Kidney (tissue), 22 donors: ENCODE measurements at regions of chr6 and their contacts with region 1.

Region 1: GRCh38 chr6:125858427-125859320 is 67.9 kb downstream of the NCOA7 start:
- DNase-seq: peak in 4 of 5 donors; percentile 43 to 88 (median 70)
- H3K4me3 ChIP-seq: no peak overlapping the region
- H3K27ac ChIP-seq: no peak overlapping the region
- H3K4me1 ChIP-seq: peaks cover 0 to under 1% (median 0%) of the 10 kb centered on the region in 3 donors
- H3K27me3 ChIP-seq: no peaks in the 10 kb centered on the region
- CTCF ChIP-seq: peak; percentile 75

Region 2: GRCh38 chr6:125753218-125753936 is 105.3 kb before region 1 on chr6:
- intact Hi-C with region 1: no loop called
- DNase-seq: peak in 2 of 5 donors; percentile 43 to 45
- H3K4me3 ChIP-seq: no peak overlapping the region
- H3K27ac ChIP-seq: no peak overlapping the region
- H3K4me1 ChIP-seq: peaks cover 0 to 2% (median 0%) of the 10 kb centered on the region in 3 donors
- H3K27me3 ChIP-seq: peaks cover 12% of the 10 kb centered on the region
- CTCF ChIP-seq: peak; percentile 45

Region 3: DNA sequence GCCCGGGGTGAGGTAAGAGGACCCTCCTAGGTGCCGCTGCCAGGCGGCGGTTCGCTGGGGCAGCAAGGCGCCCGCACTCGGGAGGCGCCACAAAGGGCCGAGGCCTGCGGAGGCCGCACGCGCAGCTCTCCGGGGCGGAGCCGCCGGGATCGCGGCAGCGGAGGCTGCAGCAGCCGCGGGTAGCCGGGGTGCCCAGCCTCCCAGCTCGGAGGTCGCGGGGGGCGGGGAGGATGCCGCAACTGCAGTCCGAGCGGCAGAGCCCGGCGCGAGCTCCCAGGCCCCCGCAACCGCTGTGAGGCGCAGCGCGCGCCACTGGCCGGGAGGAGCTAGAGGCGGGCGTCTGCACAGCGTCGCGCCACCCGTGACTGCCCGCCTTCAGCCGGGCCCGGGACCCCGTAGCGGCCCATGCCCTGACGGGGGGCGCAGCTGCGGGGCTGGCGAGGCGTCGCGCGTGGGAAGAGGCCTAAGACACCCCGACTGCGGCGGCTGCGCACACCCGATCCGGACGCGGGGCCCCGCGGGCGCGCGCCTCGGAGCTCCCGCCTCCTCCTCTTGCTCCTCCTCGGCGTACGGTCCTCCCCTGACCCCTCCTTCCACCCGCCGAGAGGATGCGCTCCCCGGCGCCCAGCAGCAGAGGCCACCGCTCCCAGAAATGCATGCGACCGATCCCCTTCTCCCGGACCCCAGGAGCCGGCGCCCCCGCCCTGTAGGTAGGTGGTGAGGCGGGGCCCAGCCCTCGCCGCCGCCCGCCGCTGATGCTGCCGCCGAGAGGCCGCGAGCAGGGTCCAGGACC is 68.1 kb before region 1 on chr6 and contains the start of gene NCOA7:
- intact Hi-C with region 1: loop called (anchors 10 kb)
- DNase-seq: peak; percentile 88 to 95 (median 92)
- H3K4me3 ChIP-seq: peak within 1 kb of the TSS; percentile 68 to 96 (median 80)
- H3K27ac ChIP-seq: peak within 1 kb of the TSS; percentile 89 to 93
- H3K4me1 ChIP-seq: peaks cover 0 to 17% (median 13%) of the 10 kb centered on the region in 3 donors
- H3K27me3 ChIP-seq: no peaks in the 10 kb centered on the region
- CTCF ChIP-seq: no peak
- total RNA-seq, gene NCOA7: 135 TPM

Region 4: DNA sequence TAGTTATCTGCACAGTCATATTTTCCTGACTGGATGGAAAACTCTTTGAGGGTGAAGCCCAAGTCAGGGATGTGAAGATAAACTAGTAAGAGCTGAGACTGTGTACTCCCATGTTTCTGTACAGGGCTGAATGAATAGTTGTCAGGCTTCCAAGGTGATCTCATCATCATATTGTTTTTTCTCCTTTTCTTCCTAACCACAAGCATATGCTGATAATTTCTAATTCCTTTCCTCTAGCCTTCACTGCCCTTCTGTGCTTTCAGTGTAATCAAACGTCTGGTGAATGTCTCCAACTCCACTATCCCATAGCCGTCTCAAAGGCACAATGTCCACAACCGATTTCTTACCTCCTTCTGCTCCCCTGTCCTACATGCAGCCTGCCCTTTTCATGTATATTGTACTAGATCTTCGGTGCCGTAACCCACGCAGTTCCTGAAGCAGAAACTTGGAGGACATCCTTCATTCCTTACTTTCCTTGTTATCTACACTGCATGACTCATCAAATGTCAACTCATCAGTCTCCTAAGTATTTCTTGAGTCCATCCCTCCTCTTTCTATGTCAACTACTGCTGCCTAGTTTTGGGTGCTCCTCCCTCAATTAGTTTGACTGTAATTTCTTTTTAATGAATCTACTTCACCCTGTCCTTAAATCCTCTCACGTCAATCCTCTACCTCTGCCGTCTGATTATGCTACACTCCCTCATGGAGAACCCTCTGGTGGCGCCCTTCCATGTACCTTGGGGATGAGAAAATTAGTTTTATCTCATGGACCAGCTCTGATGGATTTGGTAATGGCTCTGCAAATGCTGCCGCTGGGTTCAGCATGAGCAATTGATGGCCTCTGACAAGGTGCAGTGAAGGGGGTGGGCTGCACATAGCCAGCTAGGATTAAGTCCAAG is 46.0 kb before region 1 on chr6:
- intact Hi-C with region 1: no loop called
- DNase-seq: no peak
- H3K4me3 ChIP-seq: no peak overlapping the region
- H3K27ac ChIP-seq: peak overlapping the region in 1 of 2 donors; percentile 59
- H3K4me1 ChIP-seq: peaks cover 2 to 20% (median 15%) of the 10 kb centered on the region in 3 donors
- H3K27me3 ChIP-seq: no peaks in the 10 kb centered on the region
- CTCF ChIP-seq: no peak

Region 5: GRCh38 chr6:125918681-125919566 is 60.2 kb after region 1 on chr6:
- intact Hi-C with region 1: no loop called
- DNase-seq: peak in 3 of 5 donors; percentile 49 to 93 (median 92)
- H3K4me3 ChIP-seq: peak overlapping the region; percentile 56 to 77 (median 59)
- H3K27ac ChIP-seq: peak overlapping the region; percentile 81 to 97
- H3K4me1 ChIP-seq: peaks cover 4 to 10% (median 4%) of the 10 kb centered on the region in 3 donors
- H3K27me3 ChIP-seq: no peaks in the 10 kb centered on the region
- CTCF ChIP-seq: no peak

Region 6: GRCh38 chr6:126007800-126008199 is 149.1 kb after region 1 on chr6:
- intact Hi-C with region 1: no loop called
- DNase-seq: no peak
- H3K4me3 ChIP-seq: no peak overlapping the region
- H3K27ac ChIP-seq: no peak overlapping the region
- H3K4me1 ChIP-seq: no peaks in the 10 kb centered on the region
- H3K27me3 ChIP-seq: no peaks in the 10 kb centered on the region
- CTCF ChIP-seq: no peak